Caco-2 (cell line): ENCODE measurements at regions of chr18 and their contacts with region 1.

Region 1: DNA sequence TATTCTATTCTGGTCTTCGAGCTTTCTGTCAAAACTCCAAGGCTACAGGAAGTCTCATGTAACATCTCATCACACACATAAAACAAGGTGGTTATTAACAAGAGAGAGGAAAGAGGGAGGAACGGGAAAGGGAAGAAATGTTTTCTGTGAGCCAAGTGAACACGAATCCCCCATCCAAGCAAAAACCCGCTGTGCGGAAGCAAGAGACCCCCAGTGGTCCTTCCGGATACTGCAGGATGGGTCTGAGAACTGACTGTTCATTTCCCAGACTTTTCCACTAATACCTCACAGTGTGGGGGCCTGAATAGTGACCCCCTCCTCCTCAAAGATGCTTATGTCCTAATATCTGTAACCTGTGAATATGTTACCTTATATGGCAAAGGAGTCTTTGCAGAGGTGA is 19.0 kb upstream of the DIPK1C start:
- DNase-seq: peak in 1 of 2 experiments; percentile 47
- H3K4me3 ChIP-seq: no peak overlapping the region
- H3K4me3 Mint-ChIP-seq: no peak overlapping the region
- H3K27ac Mint-ChIP-seq: no peak overlapping the region
- H3K4me1 ChIP-seq: peaks cover 8% of the 10 kb centered on the region; the same call in 1 of the 2 replicates
- H3K4me1 Mint-ChIP-seq: peaks cover 6% of the 10 kb centered on the region
- H3K27me3 ChIP-seq: no peaks in the 10 kb centered on the region
- H3K27me3 Mint-ChIP-seq: no peaks in the 10 kb centered on the region
- CTCF ChIP-seq: peak; percentile 49 to 56

Region 2: GRCh38 chr18:74353169-74353775 is 122.9 kb before region 1 on chr18:
- CTCF ChIA-PET with region 1: no interaction called
- POLR2A ChIA-PET with region 1: no interaction called
- intact Hi-C with region 1: loop called (anchors 5 kb)
- DNase-seq: peak; percentile 39 to 45
- H3K4me3 ChIP-seq: no peak overlapping the region
- H3K4me3 Mint-ChIP-seq: no peak overlapping the region
- H3K27ac Mint-ChIP-seq: no peak overlapping the region
- H3K4me1 ChIP-seq: no peaks in the 10 kb centered on the region
- H3K4me1 Mint-ChIP-seq: no peaks in the 10 kb centered on the region
- H3K27me3 ChIP-seq: no peaks in the 10 kb centered on the region
- H3K27me3 Mint-ChIP-seq: no peaks in the 10 kb centered on the region
- CTCF ChIP-seq: peak; percentile 44 to 73